ENCODE measurements at regions of chr5 and their contacts with region 1.

Region 1: GRCh38 chr5:148179234-148179824 is 11.0 kb downstream of the SPINK14 start:
- DNase-seq: peak; percentile 11
- H3K4me3 Mint-ChIP-seq: no peak overlapping the region
- H3K27ac Mint-ChIP-seq: no peak overlapping the region
- H3K4me1 Mint-ChIP-seq: no peaks in the 10 kb centered on the region
- H3K27me3 Mint-ChIP-seq: peaks cover 11% of the 10 kb centered on the region

Region 2: GRCh38 chr5:147949711-147950573 is 229.4 kb before region 1 on chr5:
- CTCF ChIA-PET with region 1: no interaction called
- intact Hi-C with region 1: loop called (anchors 1 kb)
- DNase-seq: no peak
- H3K4me3 Mint-ChIP-seq: no peak overlapping the region
- H3K27ac Mint-ChIP-seq: no peak overlapping the region
- H3K4me1 Mint-ChIP-seq: no peaks in the 10 kb centered on the region
- H3K27me3 Mint-ChIP-seq: peaks cover 2% of the 10 kb centered on the region

Region 3: DNA sequence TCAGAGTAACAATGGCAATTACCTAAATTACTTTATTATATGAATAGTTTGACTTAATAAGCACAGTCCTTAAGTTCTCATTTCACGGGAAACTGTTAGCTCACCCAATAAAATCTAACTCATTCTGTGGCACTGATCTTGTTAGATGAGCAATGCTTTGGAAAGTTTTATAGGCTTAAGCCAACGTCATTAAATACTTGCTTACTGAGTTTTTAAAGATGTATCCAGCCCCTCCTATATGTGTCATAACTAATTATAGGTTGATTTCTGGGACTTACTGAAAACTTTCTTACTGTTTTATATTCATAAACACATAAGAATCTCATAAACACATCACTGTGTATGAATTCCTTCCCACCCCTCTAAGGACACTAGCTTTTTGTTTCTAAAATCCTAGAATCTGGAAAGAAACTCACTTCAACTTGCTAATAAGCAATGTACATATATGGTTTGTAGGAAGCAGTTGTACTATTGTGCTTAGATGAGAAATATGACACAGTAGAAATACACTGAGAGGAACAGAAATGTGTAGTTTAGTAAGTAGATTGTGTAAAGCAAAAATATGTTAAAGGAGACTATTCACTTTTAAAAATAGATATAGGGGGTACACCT is 44.9 kb after region 1 on chr5:
- CTCF ChIA-PET with region 1: no interaction called
- intact Hi-C with region 1: no loop called
- DNase-seq: no peak
- H3K4me3 Mint-ChIP-seq: no peak overlapping the region
- H3K27ac Mint-ChIP-seq: no peak overlapping the region
- H3K4me1 Mint-ChIP-seq: no peaks in the 10 kb centered on the region
- H3K27me3 Mint-ChIP-seq: peaks cover 12% of the 10 kb centered on the region

Region 4: GRCh38 chr5:148237785-148238184 is 58.5 kb after region 1 on chr5:
- CTCF ChIA-PET with region 1: no interaction called
- intact Hi-C with region 1: no loop called
- DNase-seq: no peak
- H3K4me3 Mint-ChIP-seq: no peak overlapping the region
- H3K27ac Mint-ChIP-seq: no peak overlapping the region
- H3K4me1 Mint-ChIP-seq: no peaks in the 10 kb centered on the region
- H3K27me3 Mint-ChIP-seq: no peaks in the 10 kb centered on the region

Region 5: DNA sequence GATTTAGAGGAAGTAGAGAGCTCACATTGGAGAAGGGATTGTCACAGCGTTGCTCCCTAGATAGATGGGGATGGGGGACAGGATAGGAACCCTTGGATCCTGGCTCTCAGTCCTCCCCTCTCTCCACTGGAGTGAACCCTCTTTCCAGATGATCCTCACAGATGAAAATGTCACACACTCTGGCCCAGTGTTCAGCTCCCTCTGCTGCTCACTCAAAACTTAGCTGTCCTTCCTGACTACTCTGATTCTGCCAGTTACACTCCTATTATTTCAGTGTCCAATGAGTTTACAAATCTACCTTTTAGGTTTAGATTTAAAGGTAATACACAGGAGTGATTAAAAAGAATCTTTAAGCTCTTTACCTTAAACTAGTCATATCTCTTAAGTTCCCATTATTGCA is 127.1 kb after region 1 on chr5:
- CTCF ChIA-PET with region 1: no interaction called
- intact Hi-C with region 1: loop called (anchors 5 kb)
- DNase-seq: no peak
- H3K4me3 Mint-ChIP-seq: no peak overlapping the region
- H3K27ac Mint-ChIP-seq: no peak overlapping the region
- H3K4me1 Mint-ChIP-seq: no peaks in the 10 kb centered on the region
- H3K27me3 Mint-ChIP-seq: peaks cover 6% of the 10 kb centered on the region

Region 6: DNA sequence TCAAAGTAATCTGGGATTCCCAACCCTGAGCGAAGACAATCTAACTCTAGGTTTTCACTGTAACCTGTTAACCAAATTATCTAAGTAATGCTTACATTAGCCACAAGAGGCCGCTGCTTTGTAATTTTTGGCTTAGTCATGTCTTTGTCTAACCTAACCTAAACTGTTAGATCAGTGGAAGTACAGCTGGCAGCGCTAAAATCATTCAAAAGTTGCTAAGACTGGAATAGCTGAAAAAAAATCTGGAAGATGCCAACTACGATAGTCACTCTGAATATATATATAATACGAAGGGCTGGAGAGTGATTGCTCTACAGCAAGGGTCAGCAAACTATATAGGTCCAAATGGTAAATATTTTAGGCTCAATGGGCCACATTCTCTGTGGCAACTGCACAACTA is 264.7 kb after region 1 on chr5:
- CTCF ChIA-PET with region 1: interaction called, 3 read pairs
- intact Hi-C with region 1: loop called (anchors 1 kb)
- DNase-seq: peak; percentile 67
- H3K4me3 Mint-ChIP-seq: no peak overlapping the region
- H3K27ac Mint-ChIP-seq: no peak overlapping the region
- H3K4me1 Mint-ChIP-seq: no peaks in the 10 kb centered on the region
- H3K27me3 Mint-ChIP-seq: no peaks in the 10 kb centered on the region

Region 7: GRCh38 chr5:148511810-148512347 is 332.6 kb after region 1 on chr5:
- CTCF ChIA-PET with region 1: no interaction called
- intact Hi-C with region 1: no loop called
- DNase-seq: no peak
- H3K4me3 Mint-ChIP-seq: no peak overlapping the region
- H3K27ac Mint-ChIP-seq: no peak overlapping the region
- H3K4me1 Mint-ChIP-seq: no peaks in the 10 kb centered on the region
- H3K27me3 Mint-ChIP-seq: peaks cover 6% of the 10 kb centered on the region

Region 8: GRCh38 chr5:149114403-149115312 is 935.3 kb after region 1 on chr5:
- CTCF ChIA-PET with region 1: no interaction called
- intact Hi-C with region 1: loop called (anchors 5 kb)
- DNase-seq: peak; percentile 67
- H3K4me3 Mint-ChIP-seq: no peak overlapping the region
- H3K27ac Mint-ChIP-seq: no peak overlapping the region
- H3K4me1 Mint-ChIP-seq: no peaks in the 10 kb centered on the region
- H3K27me3 Mint-ChIP-seq: peaks cover 4% of the 10 kb centered on the region